GM12878 (cell line): ENCODE measurements at regions of chr2 and their contacts with region 1.

Region 1: GRCh38 chr2:186503848-186504606 is 18.0 kb downstream of the ZC3H15 start:
- DNase-seq: no peak
- ATAC-seq: peak; percentile 67
- H3K4me3 ChIP-seq: no peak overlapping the region
- H3K27ac ChIP-seq: no peak overlapping the region
- H3K4me1 ChIP-seq: no peaks in the 10 kb centered on the region
- H3K27me3 ChIP-seq: no peaks in the 10 kb centered on the region
- CTCF ChIP-seq: peak in 2 of 3 experiments; percentile 18 to 45; a peak in 3 of 6 replicates
- EP300 ChIP-seq: no peak
- POLR2A ChIP-seq: no peak
- RAD21 ChIP-seq: peak; percentile 48

Region 2: DNA sequence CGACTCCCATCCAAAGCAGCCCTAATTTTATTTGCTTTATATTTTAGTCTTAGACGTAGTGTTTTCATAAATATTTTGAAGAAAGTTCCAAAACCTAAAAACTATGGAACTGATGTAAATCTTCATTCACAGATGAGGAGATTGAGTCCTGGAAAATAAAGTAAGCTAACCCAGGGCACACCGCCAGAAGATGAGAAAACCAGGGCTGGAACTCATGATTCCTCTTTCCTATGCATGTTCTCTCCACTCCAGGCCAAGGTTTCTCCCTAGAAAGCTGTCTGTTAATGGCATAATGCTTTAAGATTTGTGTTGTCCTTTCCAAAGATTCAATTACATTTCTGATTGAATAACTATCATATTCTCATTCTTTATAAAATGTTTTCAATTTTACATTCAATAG is 96.4 kb before region 1 on chr2:
- CTCF ChIA-PET with region 1: no interaction called
- POLR2A ChIA-PET with region 1: no interaction called
- RAD21 ChIA-PET with region 1: no interaction called
- SMC1A ChIA-PET with region 1: no interaction called
- in situ Hi-C with region 1: no loop called
- intact Hi-C with region 1: no loop called
- DNase-seq: no peak
- ATAC-seq: no peak
- H3K4me3 ChIP-seq: no peak overlapping the region
- H3K27ac ChIP-seq: no peak overlapping the region
- H3K4me1 ChIP-seq: no peaks in the 10 kb centered on the region
- H3K27me3 ChIP-seq: no peaks in the 10 kb centered on the region
- CTCF ChIP-seq: no peak
- EP300 ChIP-seq: no peak
- POLR2A ChIP-seq: no peak
- RAD21 ChIP-seq: no peak

Region 3: DNA sequence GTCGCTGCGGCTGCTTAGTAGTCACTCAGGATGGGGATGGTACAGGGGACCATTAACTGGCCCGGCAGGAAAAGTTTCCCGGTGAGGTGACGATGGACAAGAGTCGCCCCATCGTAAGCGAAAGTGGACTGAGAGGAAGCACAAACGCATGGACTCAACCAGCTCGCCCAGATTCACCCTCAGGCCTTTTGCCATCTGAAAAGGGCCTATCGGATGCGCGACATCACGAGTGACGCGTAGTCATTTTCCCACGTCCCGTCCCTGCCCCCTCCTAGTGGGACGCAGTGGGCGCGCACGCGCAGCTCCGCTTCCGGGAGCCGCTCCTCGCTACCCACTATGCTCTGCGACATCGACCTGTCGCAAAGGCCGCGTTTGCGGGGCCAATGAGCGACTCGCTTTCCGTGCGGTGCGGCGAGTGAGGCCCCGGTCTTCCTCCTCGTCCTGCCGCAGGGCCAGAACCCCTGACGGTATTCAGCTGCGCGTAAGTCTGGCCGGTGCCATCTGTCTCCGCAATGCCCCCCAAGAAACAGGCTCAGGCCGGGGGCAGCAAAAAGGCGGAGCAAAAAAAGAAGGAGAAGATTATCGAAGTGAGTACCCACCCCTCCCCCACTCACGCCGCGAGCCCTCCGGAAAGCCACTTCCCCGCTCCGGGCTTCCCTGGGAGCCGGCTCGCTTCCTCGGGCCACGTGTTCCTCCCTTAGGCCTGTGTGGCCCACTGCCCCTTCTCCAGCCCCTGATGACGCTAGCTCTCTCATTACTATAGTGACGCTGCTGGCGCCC is 18.0 kb before region 1 on chr2 and contains the start of gene ZC3H15:
- CTCF ChIA-PET with region 1: interaction called, 46 read pairs
- POLR2A ChIA-PET with region 1: interaction called, 3 read pairs
- RAD21 ChIA-PET with region 1: interaction called, 3 read pairs
- SMC1A ChIA-PET with region 1: interaction called, 56 read pairs
- in situ Hi-C with region 1: no loop called
- intact Hi-C with region 1: no loop called
- DNase-seq: peak; percentile 97
- ATAC-seq: peak; percentile 79
- H3K4me3 ChIP-seq: peak within 1 kb of the TSS; percentile 86
- H3K27ac ChIP-seq: peak within 1 kb of the TSS; percentile 97
- H3K4me1 ChIP-seq: 0 out of 2 replicates have a peak, but pooled peaks cover 4% of the 10 kb centered on the region
- H3K27me3 ChIP-seq: no peaks in the 10 kb centered on the region
- CTCF ChIP-seq: no peak
- EP300 ChIP-seq: no peak
- POLR2A ChIP-seq: peak; percentile 97
- RAD21 ChIP-seq: no peak
- polyA plus RNA-seq, gene ZC3H15: 115 to 122 TPM

Region 4: DNA sequence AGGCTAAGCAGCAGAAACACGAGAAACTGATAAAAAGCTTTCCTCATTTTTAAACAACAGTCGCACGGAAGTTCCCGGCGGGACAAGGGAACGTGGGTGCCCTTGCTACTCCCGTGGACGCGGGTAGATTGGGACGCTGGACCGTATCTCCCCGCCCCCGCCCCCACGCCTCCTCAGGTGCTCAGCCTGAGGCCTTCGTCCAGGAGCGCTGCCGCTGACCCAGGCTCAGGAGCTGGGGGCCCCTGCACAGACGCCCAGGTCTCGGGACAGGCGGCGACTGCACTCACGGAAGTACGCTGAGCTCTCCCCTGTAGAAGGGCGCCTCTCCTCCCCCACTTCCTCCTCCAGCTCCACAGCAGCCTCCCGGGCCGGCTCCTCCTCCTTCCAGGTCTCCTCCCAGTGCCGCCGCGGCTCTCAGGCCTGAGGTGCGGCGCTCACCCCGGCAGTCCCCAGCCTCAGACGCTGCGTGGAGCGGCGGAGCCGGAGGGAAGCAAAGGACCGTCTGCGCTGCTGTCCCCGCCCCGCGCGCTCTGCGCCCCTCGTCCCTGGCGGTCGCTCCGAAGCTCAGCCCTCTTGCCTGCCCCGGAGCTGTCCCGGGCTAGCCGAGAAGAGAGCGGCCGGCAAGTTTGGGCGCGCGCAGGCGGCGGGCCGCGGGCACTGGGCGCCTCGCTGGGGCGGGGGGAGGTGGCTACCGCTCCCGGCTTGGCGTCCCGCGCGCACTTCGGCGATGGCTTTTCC is 85.8 kb after region 1 on chr2 and contains the start of gene ITGAV:
- CTCF ChIA-PET with region 1: interaction called, 5 read pairs
- POLR2A ChIA-PET with region 1: no interaction called
- RAD21 ChIA-PET with region 1: no interaction called
- SMC1A ChIA-PET with region 1: interaction called, 7 read pairs
- in situ Hi-C with region 1: no loop called
- intact Hi-C with region 1: loop called (anchors 5 kb)
- DNase-seq: peak; percentile 57
- ATAC-seq: peak; percentile 93
- H3K4me3 ChIP-seq: peak within 1 kb of the TSS; percentile 95
- H3K27ac ChIP-seq: peak within 1 kb of the TSS; percentile 89
- H3K4me1 ChIP-seq: peaks cover 6% of the 10 kb centered on the region; the same call in 1 of the 2 replicates
- H3K27me3 ChIP-seq: no peaks in the 10 kb centered on the region
- CTCF ChIP-seq: no peak
- EP300 ChIP-seq: no peak
- POLR2A ChIP-seq: peak; percentile 99
- RAD21 ChIP-seq: no peak
- polyA plus RNA-seq, gene ITGAV: 2.1 to 2.2 TPM

Region 5: DNA sequence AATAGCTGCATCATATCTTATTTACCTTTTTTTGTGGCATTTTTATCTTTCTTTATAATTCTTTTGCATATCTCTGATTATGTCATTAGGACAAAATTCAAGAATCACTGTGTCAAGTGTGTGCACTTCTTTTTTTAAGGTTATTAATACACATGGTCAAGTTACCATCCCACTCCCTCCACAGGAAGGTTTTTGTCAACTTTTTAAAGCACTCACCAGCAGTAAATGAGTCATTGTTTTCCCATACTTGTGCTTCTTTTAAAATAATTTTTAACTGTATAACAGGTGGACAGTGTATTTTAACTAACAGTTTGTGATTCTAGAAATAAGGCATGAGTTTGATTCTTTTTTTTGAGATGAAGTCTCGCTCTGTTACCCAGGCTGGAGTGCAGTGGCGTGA is 144.1 kb after region 1 on chr2:
- CTCF ChIA-PET with region 1: interaction called, 244 read pairs
- POLR2A ChIA-PET with region 1: no interaction called
- RAD21 ChIA-PET with region 1: interaction called, 94 read pairs
- SMC1A ChIA-PET with region 1: interaction called, 115 read pairs
- in situ Hi-C with region 1: loop called (anchors 5 kb)
- intact Hi-C with region 1: no loop called
- DNase-seq: no peak
- ATAC-seq: no peak
- H3K4me3 ChIP-seq: no peak overlapping the region
- H3K27ac ChIP-seq: no peak overlapping the region
- H3K4me1 ChIP-seq: no peaks in the 10 kb centered on the region
- H3K27me3 ChIP-seq: no peaks in the 10 kb centered on the region
- CTCF ChIP-seq: no peak
- EP300 ChIP-seq: no peak
- POLR2A ChIP-seq: no peak
- RAD21 ChIP-seq: no peak

Region 6: DNA sequence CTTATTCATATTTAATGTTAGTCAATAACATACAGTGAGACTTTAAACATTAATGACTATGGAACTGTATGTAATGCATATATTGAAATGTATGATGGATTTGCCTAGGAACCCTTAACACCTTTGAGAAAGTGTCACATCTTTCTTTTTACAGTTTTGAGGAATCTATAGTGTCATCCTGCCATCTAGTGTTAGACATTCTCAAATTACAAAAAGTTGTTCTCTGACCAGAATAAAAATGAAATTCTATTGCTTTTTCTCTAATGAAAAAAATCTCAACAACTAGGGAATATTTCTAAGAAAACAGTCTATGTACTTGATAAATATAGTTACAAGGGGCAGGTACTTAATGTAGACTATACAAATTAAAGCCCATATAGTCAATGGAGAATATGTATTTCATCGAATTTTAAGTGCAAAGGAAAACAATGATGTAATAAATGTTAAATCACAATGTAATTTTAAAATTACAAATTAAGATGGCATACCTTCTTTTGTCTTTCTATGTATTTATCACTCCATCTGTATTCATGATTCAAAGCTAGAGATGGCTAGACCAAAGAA is 949.1 kb after region 1 on chr2:
- CTCF ChIA-PET with region 1: interaction called, 6 read pairs
- POLR2A ChIA-PET with region 1: no interaction called
- RAD21 ChIA-PET with region 1: interaction called, 5 read pairs
- SMC1A ChIA-PET with region 1: interaction called, 8 read pairs
- in situ Hi-C with region 1: loop called (anchors 25 kb)
- intact Hi-C with region 1: loop called (anchors 5 kb)
- DNase-seq: no peak
- ATAC-seq: 0 out of 3 replicates have a peak, but pooled peaks have one; percentile 11
- H3K4me3 ChIP-seq: no peak overlapping the region
- H3K27ac ChIP-seq: no peak overlapping the region
- H3K4me1 ChIP-seq: no peaks in the 10 kb centered on the region
- H3K27me3 ChIP-seq: no peaks in the 10 kb centered on the region
- CTCF ChIP-seq: peak; percentile 8 to 67 (median 27); a peak in 4 of 6 replicates
- EP300 ChIP-seq: no peak
- POLR2A ChIP-seq: no peak
- RAD21 ChIP-seq: peak; percentile 81